Heart left ventricle (tissue), 16 donors: ENCODE measurements at regions of chr1 and their contacts with region 1.

Region 1: GRCh38 chr1:6245086-6245868 is 1.3 kb downstream of the HES3 start:
- DNase-seq: peak; percentile 73 to 91 (median 82)
- ATAC-seq: peak; percentile 30 to 82 (median 80)
- H3K4me3 ChIP-seq: peak overlapping the region in 1 of 12 donors; percentile 25
- H3K27ac ChIP-seq: no peak overlapping the region
- H3K4me1 ChIP-seq: peaks cover 0 to 56% (median 28%) of the 10 kb centered on the region in 12 donors
- H3K27me3 ChIP-seq: peaks cover 35 to 97% (median 65%) of the 10 kb centered on the region in 9 donors
- CTCF ChIP-seq: peak; percentile 68 to 87 (median 80)
- POLR2A ChIP-seq: no peak

Region 2: DNA sequence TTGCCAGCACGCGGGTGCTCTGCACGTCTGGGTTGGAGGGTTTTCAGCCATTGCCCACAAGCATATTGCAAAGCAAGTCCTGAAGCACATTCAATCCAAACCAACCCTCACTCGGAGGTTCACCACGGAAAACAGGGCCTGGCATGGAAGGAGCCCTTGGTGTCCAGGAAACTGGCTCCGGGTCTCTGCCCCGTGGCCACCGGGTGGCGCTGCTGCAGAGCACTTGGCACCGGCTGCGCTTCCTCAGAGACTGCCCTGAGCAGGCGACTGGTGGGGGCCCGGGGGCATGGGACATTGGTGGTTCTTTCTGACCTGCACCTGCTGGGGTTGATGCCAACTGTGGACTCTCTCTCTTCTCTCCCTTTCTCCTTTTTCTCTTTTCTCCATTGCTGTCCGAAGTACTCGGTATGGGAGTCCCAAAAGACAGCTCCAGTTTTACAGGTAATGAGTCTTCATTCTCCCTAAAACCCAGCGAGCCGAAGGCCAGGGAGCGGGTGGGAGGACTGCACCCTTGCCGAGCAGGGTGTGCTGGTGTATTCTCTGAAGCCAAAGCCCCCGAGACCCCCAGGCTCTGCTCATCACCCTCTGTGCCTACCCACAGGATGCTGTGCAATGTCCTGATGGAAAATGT is 203.7 kb before region 1 on chr1:
- intact Hi-C with region 1: loop called in 2 of 10 experiments (anchors 5 kb)
- DNase-seq: no peak
- ATAC-seq: peak in 2 of 4 donors; percentile 44 to 50
- H3K4me3 ChIP-seq: no peak overlapping the region
- H3K27ac ChIP-seq: no peak overlapping the region
- H3K4me1 ChIP-seq: peaks cover 0 to 6% (median 0%) of the 10 kb centered on the region in 12 donors
- H3K27me3 ChIP-seq: no peaks in the 10 kb centered on the region
- CTCF ChIP-seq: peak in 10 of 12 donors; percentile 27 to 54 (median 49)
- POLR2A ChIP-seq: no peak

Region 3: GRCh38 chr1:6108937-6109614 is 136.2 kb before region 1 on chr1:
- intact Hi-C with region 1: loop called in 2 of 10 experiments (anchors 1 to 10 kb)
- DNase-seq: peak in 2 of 5 donors; percentile 19 to 53
- ATAC-seq: peak in 3 of 4 donors; percentile 39 to 65 (median 57)
- H3K4me3 ChIP-seq: no peak overlapping the region
- H3K27ac ChIP-seq: no peak overlapping the region
- H3K4me1 ChIP-seq: no peaks in the 10 kb centered on the region
- H3K27me3 ChIP-seq: peaks cover 0 to 25% (median 3%) of the 10 kb centered on the region in 9 donors
- CTCF ChIP-seq: peak in 8 of 12 donors; percentile 18 to 43 (median 26)
- POLR2A ChIP-seq: no peak

Region 4: DNA sequence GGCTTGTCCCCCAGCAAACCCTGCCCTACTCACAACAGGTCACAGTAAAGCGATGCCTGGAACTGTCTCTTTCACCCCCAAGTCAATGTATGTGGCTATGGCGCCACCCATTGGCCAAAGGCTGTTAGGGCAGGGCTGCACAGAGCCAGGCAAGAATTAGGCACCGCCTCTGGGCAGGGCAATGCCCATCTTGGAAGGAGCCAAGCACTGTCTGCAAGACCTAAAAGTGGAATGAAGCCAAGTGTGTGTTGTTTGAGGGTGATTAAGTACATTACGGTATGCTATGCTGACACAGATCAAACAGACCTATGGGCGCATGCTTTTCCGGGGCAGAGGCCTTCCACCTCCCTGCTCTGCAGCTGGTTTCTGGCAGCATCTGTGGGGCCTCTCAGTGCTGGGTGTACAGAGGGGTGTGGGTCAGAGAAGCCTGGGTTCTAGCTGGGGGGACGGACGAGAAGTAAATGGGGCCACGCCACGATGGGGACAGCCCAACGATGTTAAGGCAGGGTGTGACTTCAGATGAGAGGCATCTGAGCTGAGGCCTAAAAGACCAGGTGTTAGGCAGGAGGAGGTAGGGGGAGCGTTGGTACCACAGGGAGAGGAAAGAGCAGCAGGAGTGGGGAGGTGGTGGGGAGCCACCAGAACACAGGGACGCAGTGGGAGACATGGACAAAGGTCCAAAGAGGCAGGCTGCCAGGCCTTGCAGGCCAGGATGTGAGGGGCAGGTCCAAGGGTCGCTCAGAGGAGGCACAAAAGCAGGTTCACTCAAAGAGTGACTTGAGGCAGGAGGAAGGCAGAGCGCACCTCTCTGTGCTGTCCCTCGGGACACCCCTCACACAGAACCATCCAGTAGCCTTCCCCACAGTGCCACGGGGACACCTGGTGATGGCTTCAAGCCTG is 98.5 kb after region 1 on chr1:
- intact Hi-C with region 1: loop called (anchors 1 to 2 kb)
- DNase-seq: peak; percentile 52 to 76 (median 67)
- ATAC-seq: peak; percentile 72 to 85 (median 82)
- H3K4me3 ChIP-seq: no peak overlapping the region
- H3K27ac ChIP-seq: no peak overlapping the region
- H3K4me1 ChIP-seq: peaks cover 0 to 14% (median 5%) of the 10 kb centered on the region in 12 donors
- H3K27me3 ChIP-seq: no peaks in the 10 kb centered on the region
- CTCF ChIP-seq: peak; percentile 76 to 89 (median 82)
- POLR2A ChIP-seq: no peak

Region 5: GRCh38 chr1:6409053-6409452 is 163.8 kb after region 1 on chr1:
- intact Hi-C with region 1: loop called (anchors 1 to 10 kb)
- DNase-seq: peak in 1 of 5 donors; percentile 4
- ATAC-seq: no peak
- H3K4me3 ChIP-seq: no peak overlapping the region
- H3K27ac ChIP-seq: no peak overlapping the region
- H3K4me1 ChIP-seq: no peaks in the 10 kb centered on the region
- H3K27me3 ChIP-seq: peaks cover 0 to 38% (median 7%) of the 10 kb centered on the region in 9 donors
- CTCF ChIP-seq: no peak
- POLR2A ChIP-seq: no peak